HEK293 (cell line): ENCODE measurements at regions of chr7 and their contacts with region 1.

Region 1: DNA sequence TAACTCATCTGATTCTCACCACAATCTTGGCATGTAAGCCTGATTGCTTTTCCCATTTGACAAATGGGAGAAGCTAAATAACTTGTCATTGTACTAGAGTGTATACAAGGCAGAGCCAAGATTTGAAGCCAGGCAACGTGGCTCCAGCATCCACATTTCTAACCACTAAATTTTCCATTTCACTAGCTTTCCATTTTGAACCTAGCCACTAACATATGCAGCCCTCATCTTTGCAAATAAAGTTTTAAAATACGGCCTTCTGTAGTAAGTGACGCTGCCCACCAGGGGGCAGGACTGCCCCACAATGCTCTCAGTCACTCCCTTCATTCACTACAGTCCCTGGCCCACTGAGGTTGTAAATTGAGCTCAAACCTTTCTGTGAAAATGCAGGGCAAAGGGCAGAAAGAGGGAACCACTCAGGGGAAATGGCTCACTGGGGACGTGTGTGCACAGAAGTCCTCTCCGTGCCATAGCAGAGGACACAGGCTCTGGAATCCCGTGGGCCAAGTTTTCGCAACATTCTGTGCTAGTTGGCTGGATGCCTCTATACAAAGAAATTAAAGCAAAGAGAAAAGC is 315.7 kb downstream of the TNS3 start:
- H3K4me3 ChIP-seq: no peak overlapping the region
- H3K27ac ChIP-seq: no peak overlapping the region
- H3K4me1 ChIP-seq: no peaks in the 10 kb centered on the region
- CTCF ChIP-seq: peak; percentile 38; the same call in 1 of the 2 replicates

Region 2: DNA sequence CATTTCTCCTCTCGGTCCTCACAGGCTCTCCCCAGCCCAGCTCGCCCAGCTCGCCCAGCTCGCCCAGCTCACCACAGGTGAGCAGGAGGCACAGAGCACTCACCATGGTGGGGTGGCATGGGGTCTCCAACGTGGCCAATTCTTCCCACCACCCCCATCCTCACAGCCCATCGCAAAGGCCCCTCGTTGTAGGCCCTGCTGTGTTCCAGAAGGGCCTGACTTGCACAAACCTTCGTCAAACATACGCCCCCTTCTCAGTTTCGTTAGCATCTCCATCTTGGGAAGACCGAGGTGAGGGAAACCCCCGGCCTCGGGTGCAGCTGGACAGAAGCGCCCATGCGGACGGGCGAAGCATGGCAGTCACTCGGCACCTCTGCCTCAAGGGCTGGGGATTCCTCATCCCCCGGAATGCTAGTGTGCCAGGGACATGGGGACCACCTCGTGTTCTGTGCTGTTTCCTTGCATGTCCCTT is 11.1 kb after region 1 on chr7:
- CTCF ChIA-PET with region 1: interaction called, 33 read pairs
- POLR2A ChIA-PET with region 1: no interaction called
- H3K4me3 ChIP-seq: no peak overlapping the region
- H3K27ac ChIP-seq: no peak overlapping the region
- H3K4me1 ChIP-seq: no peaks in the 10 kb centered on the region
- CTCF ChIP-seq: no peak

Region 3: GRCh38 chr7:47418601-47419381 is 152.6 kb after region 1 on chr7:
- CTCF ChIA-PET with region 1: interaction called, 10 read pairs
- POLR2A ChIA-PET with region 1: no interaction called
- H3K4me3 ChIP-seq: no peak overlapping the region
- H3K27ac ChIP-seq: no peak overlapping the region
- H3K4me1 ChIP-seq: no peaks in the 10 kb centered on the region
- CTCF ChIP-seq: no peak

Region 4: GRCh38 chr7:47807756-47808155 is 541.5 kb after region 1 on chr7:
- CTCF ChIA-PET with region 1: interaction called, 11 read pairs
- POLR2A ChIA-PET with region 1: no interaction called
- H3K4me3 ChIP-seq: no peak overlapping the region
- H3K27ac ChIP-seq: no peak overlapping the region
- H3K4me1 ChIP-seq: no peaks in the 10 kb centered on the region
- CTCF ChIP-seq: no peak

Region 5: DNA sequence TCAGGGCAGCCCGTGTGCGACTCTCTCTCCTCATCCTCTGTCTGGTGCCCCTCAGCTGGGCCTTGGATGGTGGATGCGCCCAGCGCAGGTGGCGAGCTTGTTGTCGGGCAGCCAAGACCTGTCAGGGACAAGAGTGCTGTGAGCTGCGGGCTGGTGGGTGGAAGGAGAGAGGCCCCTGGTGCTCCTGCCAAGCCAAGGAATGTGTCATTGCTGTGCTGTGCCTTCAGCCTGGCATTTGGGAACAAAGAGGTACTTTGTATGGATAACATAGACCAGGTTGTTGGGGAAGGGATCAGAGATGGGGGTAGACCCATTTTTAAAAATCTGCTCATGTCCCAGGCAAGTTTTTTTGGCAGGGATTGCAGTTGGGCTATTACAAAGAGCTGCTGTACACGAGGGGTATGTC is 561.1 kb after region 1 on chr7:
- CTCF ChIA-PET with region 1: interaction called, 10 read pairs
- POLR2A ChIA-PET with region 1: no interaction called
- H3K4me3 ChIP-seq: no peak overlapping the region
- H3K27ac ChIP-seq: no peak overlapping the region
- H3K4me1 ChIP-seq: no peaks in the 10 kb centered on the region
- CTCF ChIP-seq: no peak

Region 6: GRCh38 chr7:48168159-48168558 is 901.9 kb after region 1 on chr7:
- CTCF ChIA-PET with region 1: no interaction called
- POLR2A ChIA-PET with region 1: no interaction called
- H3K4me3 ChIP-seq: no peak overlapping the region
- H3K27ac ChIP-seq: no peak overlapping the region
- H3K4me1 ChIP-seq: no peaks in the 10 kb centered on the region
- CTCF ChIP-seq: no peak